Naive thymus-derived CD4-positive, alpha-beta T cell (primary cell): ENCODE measurements at regions of chr6 and their contacts with region 1.

Region 1: GRCh38 chr6:33570806-33571636 is 9.1 kb downstream of the BAK1 start:
- DNase-seq: peak; percentile 81 to 98 (median 95)
- ATAC-seq: peak; percentile 91
- H3K4me3 ChIP-seq: peak overlapping the region; percentile 85
- H3K4me3 Mint-ChIP-seq: peak overlapping the region; percentile 80 to 99 (median 94)
- H3K27ac ChIP-seq: peak overlapping the region; percentile 98
- H3K27ac Mint-ChIP-seq: peak overlapping the region; percentile 99 to 100 (median 100)
- H3K4me1 ChIP-seq: peaks cover 19 to 21% of the 10 kb centered on the region in 2 donors
- H3K4me1 Mint-ChIP-seq: peaks cover 8 to 57% (median 31%) of the 10 kb centered on the region in 7 donors
- H3K27me3 ChIP-seq: no peaks in the 10 kb centered on the region
- H3K27me3 Mint-ChIP-seq: peaks cover 0 to 3% (median 0%) of the 10 kb centered on the region in 5 donors

Region 2: GRCh38 chr6:33288921-33289748 is 281.9 kb before region 1 on chr6 and contains the starts of genes PFDN6 and WDR46:
- CTCF ChIA-PET with region 1: no interaction called
- POLR2A ChIA-PET with region 1: no interaction called
- intact Hi-C with region 1: loop called in 1 of 2 experiments (anchors 1 kb)
- DNase-seq: peak; percentile 55 to 90 (median 87)
- ATAC-seq: peak; percentile 96
- H3K4me3 ChIP-seq: peak within 1 kb of the TSS; percentile 97
- H3K4me3 Mint-ChIP-seq: peak within 1 kb of the TSS; percentile 89 to 99 (median 98)
- H3K27ac ChIP-seq: peak within 1 kb of the TSS; percentile 80
- H3K27ac Mint-ChIP-seq: peak within 1 kb of the TSS; percentile 89 to 98 (median 92)
- H3K4me1 ChIP-seq: peaks cover 19 to 20% of the 10 kb centered on the region in 2 donors
- H3K4me1 Mint-ChIP-seq: peaks cover 32 to 51% (median 45%) of the 10 kb centered on the region in 7 donors
- H3K27me3 ChIP-seq: no peaks in the 10 kb centered on the region
- H3K27me3 Mint-ChIP-seq: no peaks in the 10 kb centered on the region
- total RNA-seq, gene PFDN6: 14.6 to 73.2 (median 35.5) TPM
- total RNA-seq, gene WDR46: 25.3 to 62.7 (median 52.7) TPM

Region 3: DNA sequence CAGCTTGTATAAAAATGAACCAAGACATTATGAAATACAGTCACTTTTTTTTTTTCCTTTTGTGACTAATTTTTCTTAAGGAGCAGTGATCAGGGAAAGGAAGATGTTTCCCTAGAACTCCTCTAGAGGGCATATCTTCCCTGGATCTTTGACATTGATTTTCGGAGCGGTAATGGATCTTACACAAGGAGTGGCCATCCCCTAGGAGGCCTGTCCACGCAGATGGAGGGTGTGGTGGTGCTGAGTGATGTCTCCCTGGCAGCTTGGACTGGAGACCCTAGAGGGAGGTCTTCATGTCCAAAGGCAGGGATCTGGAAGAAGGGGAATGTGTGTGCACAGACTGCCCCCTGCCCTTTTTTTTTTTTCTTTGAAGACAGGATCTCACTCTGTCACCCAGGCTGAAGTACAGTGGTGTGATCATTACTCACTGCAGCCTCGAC is 186.4 kb before region 1 on chr6:
- CTCF ChIA-PET with region 1: no interaction called
- POLR2A ChIA-PET with region 1: no interaction called
- intact Hi-C with region 1: no loop called
- DNase-seq: no peak
- ATAC-seq: no peak
- H3K4me3 ChIP-seq: no peak overlapping the region
- H3K4me3 Mint-ChIP-seq: no peak overlapping the region
- H3K27ac ChIP-seq: no peak overlapping the region
- H3K27ac Mint-ChIP-seq: peak overlapping the region in 1 of 9 donors; percentile 8
- H3K4me1 ChIP-seq: no peaks in the 10 kb centered on the region
- H3K4me1 Mint-ChIP-seq: no peaks in the 10 kb centered on the region
- H3K27me3 ChIP-seq: no peaks in the 10 kb centered on the region
- H3K27me3 Mint-ChIP-seq: peaks cover 0 to 13% (median 0%) of the 10 kb centered on the region in 5 donors

Region 4: GRCh38 chr6:33417903-33418689 is 152.9 kb before region 1 on chr6 and contains the start of gene CUTA:
- CTCF ChIA-PET with region 1: no interaction called
- POLR2A ChIA-PET with region 1: interaction called, 4 read pairs
- intact Hi-C with region 1: loop called (anchors 2 kb)
- DNase-seq: peak; percentile 91 to 100 (median 99)
- ATAC-seq: peak; percentile 92
- H3K4me3 ChIP-seq: peak within 1 kb of the TSS; percentile 74
- H3K4me3 Mint-ChIP-seq: peak within 1 kb of the TSS; percentile 88 to 97 (median 94)
- H3K27ac ChIP-seq: peak within 1 kb of the TSS; percentile 94
- H3K27ac Mint-ChIP-seq: peak within 1 kb of the TSS; percentile 98 to 100 (median 99)
- H3K4me1 ChIP-seq: peaks cover 31 to 54% of the 10 kb centered on the region in 2 donors
- H3K4me1 Mint-ChIP-seq: peaks cover 60 to 89% (median 73%) of the 10 kb centered on the region in 7 donors
- H3K27me3 ChIP-seq: no peaks in the 10 kb centered on the region
- H3K27me3 Mint-ChIP-seq: no peaks in the 10 kb centered on the region
- total RNA-seq, gene CUTA: 148 to 235 (median 158) TPM

Region 5: DNA sequence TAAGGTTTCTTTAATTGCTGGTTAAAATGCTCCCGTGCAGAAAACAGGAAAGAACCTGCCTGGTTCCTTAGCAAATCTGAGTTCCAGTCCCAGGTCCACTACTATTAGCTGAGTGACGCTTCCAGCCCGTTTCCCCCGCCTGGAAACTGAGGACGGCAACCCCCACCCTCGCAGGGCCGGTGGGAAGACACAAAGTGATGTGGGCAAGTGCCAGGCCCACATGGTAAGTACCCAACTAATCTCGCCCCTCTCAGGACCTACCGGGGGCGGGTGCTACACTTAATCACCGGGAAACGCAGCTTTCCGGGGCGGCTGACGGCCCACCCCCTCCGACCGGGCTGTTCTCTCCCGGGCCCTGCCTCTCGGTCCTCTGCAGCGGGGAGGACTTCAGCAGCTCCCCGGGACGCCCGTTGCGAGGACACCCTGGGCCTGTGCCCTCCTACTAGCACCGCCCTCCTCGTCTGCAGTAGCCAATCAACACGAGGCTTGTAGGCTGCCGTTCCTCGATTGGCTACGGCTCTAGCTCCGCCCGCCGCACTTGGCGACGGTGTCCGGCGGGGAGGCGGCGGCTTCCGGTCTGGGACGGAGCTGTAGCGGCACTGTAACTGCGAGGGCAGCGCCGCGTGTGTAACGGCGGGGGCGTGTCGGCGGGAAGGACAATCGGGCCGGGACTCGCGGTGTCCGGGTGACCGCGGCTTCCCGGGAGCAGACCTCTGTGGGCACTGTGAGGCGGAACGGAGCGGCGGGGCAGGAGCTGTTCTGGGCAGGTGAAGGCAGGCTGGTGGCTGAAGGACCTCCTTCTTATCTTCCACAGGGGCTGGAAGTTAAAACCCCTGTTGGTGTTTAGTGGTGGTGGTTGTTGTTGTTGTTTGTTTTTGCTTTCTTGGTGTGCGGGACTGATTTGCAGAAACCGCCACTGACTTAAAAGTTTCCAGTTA is 116.7 kb before region 1 on chr6 and contains the start of gene ZBTB9:
- CTCF ChIA-PET with region 1: no interaction called
- POLR2A ChIA-PET with region 1: interaction called, 23 read pairs
- intact Hi-C with region 1: loop called (anchors 1 kb)
- DNase-seq: peak; percentile 80 to 93 (median 92)
- ATAC-seq: peak; percentile 100
- H3K4me3 ChIP-seq: peak within 1 kb of the TSS; percentile 93
- H3K4me3 Mint-ChIP-seq: peak within 1 kb of the TSS; percentile 88 to 99 (median 95)
- H3K27ac ChIP-seq: peak within 1 kb of the TSS; percentile 88
- H3K27ac Mint-ChIP-seq: peak within 1 kb of the TSS; percentile 86 to 98 (median 92)
- H3K4me1 ChIP-seq: peaks cover 12 to 22% of the 10 kb centered on the region in 2 donors
- H3K4me1 Mint-ChIP-seq: peaks cover 21 to 57% (median 45%) of the 10 kb centered on the region in 7 donors
- H3K27me3 ChIP-seq: no peaks in the 10 kb centered on the region
- H3K27me3 Mint-ChIP-seq: no peaks in the 10 kb centered on the region
- total RNA-seq, gene ZBTB9: 3.3 to 14.0 (median 9.8) TPM

Region 6: GRCh38 chr6:33585403-33586107 is 14.5 kb after region 1 on chr6:
- CTCF ChIA-PET with region 1: interaction called, 3 read pairs
- POLR2A ChIA-PET with region 1: interaction called, 4 read pairs
- intact Hi-C with region 1: loop called (anchors 1 kb)
- DNase-seq: peak; percentile 73 to 94 (median 80)
- ATAC-seq: peak; percentile 97
- H3K4me3 ChIP-seq: peak overlapping the region; percentile 10
- H3K4me3 Mint-ChIP-seq: peak overlapping the region in 8 of 10 donors; percentile 16 to 84 (median 51)
- H3K27ac ChIP-seq: peak overlapping the region; percentile 58
- H3K27ac Mint-ChIP-seq: peak overlapping the region; percentile 76 to 96 (median 91)
- H3K4me1 ChIP-seq: peaks cover 10 to 11% of the 10 kb centered on the region in 2 donors
- H3K4me1 Mint-ChIP-seq: peaks cover 0 to 21% (median 17%) of the 10 kb centered on the region in 7 donors
- H3K27me3 ChIP-seq: no peaks in the 10 kb centered on the region
- H3K27me3 Mint-ChIP-seq: no peaks in the 10 kb centered on the region